H1 (cell line): ENCODE measurements at regions of chr2 and their contacts with region 1.

Region 1: GRCh38 chr2:65264821-65265670 is 37.4 kb downstream of the ACTR2 start:
- DNase-seq: no peak
- H3K4me3 ChIP-seq: no peak overlapping the region
- H3K27ac ChIP-seq: no peak overlapping the region
- H3K4me1 ChIP-seq: peaks cover 0 to 4% (median 2%) of the 10 kb centered on the region in 4 experiments; a peak in 1 of 7 replicates
- H3K27me3 ChIP-seq: no peaks in the 10 kb centered on the region; a peak in 1 of 7 replicates
- CTCF ChIP-seq: peak in 2 of 3 experiments; percentile 47 to 66; a peak in 2 of 4 replicates
- EP300 ChIP-seq: no peak
- POLR2A ChIP-seq: no peak
- RAD21 ChIP-seq: peak; percentile 87 to 89

Region 2: DNA sequence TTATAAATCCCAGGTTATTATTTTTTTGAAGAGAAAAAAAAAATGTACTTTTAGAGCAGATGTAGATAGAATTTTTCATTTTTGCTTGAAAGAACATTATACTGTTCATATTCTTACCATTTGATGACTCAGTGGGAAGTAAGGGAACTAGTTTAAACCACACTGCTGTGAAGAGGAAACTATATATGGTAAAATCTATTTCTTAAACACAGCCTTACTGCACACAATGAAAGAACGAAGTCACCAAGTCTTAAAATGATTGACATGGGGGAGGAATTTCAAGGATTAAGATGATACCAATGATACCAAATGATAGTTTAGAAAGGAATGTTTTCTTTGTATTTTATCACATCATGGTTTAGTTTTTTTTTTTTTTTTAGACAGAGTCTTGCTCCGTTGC is 32.4 kb before region 1 on chr2:
- CTCF ChIA-PET with region 1: no interaction called
- POLR2A ChIA-PET with region 1: no interaction called
- DNase-seq: no peak
- H3K4me3 ChIP-seq: no peak overlapping the region
- H3K27ac ChIP-seq: no peak overlapping the region
- H3K4me1 ChIP-seq: 0 out of 7 replicates have a peak, but pooled peaks cover 0 to 3% (median 0%) of the 10 kb centered on the region in 4 experiments
- H3K27me3 ChIP-seq: no peaks in the 10 kb centered on the region
- CTCF ChIP-seq: no peak
- EP300 ChIP-seq: no peak
- POLR2A ChIP-seq: no peak
- RAD21 ChIP-seq: no peak

Region 3: DNA sequence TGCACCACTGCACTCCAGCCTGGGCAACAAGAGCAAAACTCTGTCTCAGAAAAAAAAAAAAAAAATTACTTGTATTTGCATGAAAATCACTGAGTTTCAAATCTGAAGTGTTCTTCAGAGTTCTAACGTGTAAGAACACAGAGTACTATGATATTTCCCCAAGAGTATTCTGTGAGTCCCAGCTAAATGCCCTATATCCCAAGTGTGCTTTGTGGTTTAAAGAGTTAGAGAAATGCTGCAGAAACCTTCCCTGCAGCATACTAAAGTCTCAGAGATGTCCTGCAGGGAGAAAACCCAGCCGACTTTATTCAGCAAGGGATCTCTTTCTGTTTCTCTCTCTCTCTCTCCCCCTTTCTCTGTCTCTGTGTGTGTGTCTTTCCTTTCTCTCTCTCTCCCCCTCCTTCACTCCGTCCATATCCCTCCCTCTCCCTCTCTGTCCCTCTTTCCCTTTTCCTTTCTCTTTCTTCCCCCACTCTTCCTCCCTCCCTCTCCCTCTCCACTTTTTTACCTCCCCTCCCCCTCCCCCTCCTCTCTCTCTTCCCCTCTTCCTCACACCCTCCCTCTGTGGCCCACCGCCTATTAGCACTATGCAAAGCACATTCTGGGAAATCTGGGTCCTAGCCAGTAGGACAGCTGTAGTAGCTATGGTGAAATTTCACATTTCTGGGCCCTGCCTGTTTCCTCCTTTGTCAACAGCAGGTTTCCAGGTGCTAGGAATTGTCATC is 16.7 kb after region 1 on chr2:
- CTCF ChIA-PET with region 1: interaction called, 10 read pairs
- POLR2A ChIA-PET with region 1: no interaction called
- DNase-seq: no peak
- H3K4me3 ChIP-seq: no peak overlapping the region
- H3K27ac ChIP-seq: no peak overlapping the region
- H3K4me1 ChIP-seq: 0 out of 7 replicates have a peak, but pooled peaks cover 0 to 2% (median 0%) of the 10 kb centered on the region in 4 experiments
- H3K27me3 ChIP-seq: peaks cover 22 to 47% (median 43%) of the 10 kb centered on the region in 4 experiments
- CTCF ChIP-seq: no peak
- EP300 ChIP-seq: no peak
- POLR2A ChIP-seq: no peak
- RAD21 ChIP-seq: no peak

Region 4: GRCh38 chr2:65554765-65555591 is 289.9 kb after region 1 on chr2:
- CTCF ChIA-PET with region 1: interaction called, 18 read pairs
- POLR2A ChIA-PET with region 1: no interaction called
- DNase-seq: no peak
- H3K4me3 ChIP-seq: no peak overlapping the region
- H3K27ac ChIP-seq: no peak overlapping the region
- H3K4me1 ChIP-seq: peaks cover 5 to 11% (median 9%) of the 10 kb centered on the region in 4 experiments
- H3K27me3 ChIP-seq: peaks cover 0 to 11% (median 4%) of the 10 kb centered on the region in 4 experiments; a peak in 5 of 7 replicates
- CTCF ChIP-seq: no peak
- EP300 ChIP-seq: no peak
- POLR2A ChIP-seq: no peak
- RAD21 ChIP-seq: no peak

Region 5: DNA sequence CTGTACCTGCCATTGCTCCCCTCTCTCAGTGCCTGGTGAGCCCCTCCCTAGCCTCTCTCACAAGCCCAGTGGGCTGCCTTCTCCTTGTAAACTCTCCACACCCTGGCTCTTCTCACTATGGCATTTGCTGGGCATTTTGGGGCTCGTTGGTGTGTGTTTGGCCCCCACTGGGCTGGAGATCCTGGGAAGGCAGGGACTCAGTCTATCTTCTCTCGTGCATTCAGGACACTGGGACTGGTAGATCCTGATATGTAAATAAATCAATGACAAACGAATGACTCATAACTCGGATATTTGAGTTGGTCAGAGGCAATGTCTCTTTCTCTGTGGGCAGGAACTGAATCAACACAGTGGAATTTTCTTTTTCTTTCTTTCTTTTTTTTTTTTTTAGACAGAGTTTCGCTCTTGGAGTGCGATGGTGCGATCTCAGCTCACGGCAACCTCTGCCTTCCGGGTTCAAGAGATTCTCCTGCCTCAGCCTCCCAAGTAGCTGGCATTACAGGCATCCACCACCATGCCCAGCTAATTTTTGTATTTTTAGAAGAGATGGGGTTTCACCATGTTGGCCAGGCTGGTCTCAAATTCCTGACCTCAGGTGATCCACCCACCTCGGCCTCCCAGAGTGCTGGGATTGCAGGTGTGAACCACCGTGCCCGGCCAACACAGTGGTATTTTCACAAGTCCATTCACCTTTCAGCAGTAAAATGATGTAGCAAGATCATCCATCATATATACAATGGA is 312.0 kb after region 1 on chr2:
- CTCF ChIA-PET with region 1: interaction called, 18 read pairs
- POLR2A ChIA-PET with region 1: no interaction called
- DNase-seq: no peak
- H3K4me3 ChIP-seq: no peak overlapping the region
- H3K27ac ChIP-seq: no peak overlapping the region
- H3K4me1 ChIP-seq: peaks cover 0 to 7% (median 5%) of the 10 kb centered on the region in 4 experiments; a peak in 3 of 7 replicates
- H3K27me3 ChIP-seq: no peaks in the 10 kb centered on the region
- CTCF ChIP-seq: no peak
- EP300 ChIP-seq: no peak
- POLR2A ChIP-seq: no peak
- RAD21 ChIP-seq: no peak